ENCODE measurements at regions of chr4 and their contacts with region 1.

Region 1: DNA sequence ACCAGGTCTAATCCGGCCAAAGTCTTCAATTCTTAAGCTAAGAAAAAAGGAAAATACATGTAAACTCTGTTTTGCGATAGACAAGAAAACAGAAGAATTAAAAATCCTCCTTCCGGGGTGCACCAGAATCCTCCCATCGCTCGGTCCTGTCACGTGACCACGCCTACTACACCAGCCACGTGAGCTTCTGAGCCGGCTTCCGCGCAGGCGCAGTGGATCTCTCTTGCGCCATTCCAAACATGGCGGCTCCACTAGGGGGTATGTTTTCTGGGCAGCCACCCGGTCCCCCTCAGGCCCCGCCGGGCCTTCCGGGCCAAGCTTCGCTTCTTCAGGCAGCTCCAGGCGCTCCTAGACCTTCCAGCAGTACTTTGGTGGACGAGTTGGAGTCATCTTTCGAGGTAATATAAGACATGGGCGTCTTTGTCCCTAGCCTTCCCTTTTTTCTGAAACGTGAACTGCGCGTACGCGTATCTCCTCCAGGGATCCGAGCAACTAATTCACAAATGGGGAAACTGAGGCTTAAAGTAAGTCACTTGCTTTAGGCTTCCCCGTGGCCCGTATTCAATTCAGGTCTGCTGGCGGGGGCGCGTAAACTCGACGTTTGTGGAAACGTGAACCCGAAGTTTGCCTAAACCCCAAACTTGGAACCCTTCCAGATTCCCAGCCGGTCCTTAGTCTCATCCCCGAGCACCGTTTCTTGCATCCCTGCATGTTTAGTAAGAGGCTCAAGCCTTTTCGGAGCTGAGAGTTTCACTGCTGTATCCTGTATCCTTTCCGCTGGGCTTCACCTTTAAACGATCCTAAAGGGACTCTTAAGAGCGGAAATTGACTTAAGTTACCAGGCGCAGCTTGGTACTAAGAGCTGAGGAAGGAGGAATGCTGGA is at the start of gene MED28:
- DNase-seq: peak; percentile 86 to 99 (median 96)

Region 2: DNA sequence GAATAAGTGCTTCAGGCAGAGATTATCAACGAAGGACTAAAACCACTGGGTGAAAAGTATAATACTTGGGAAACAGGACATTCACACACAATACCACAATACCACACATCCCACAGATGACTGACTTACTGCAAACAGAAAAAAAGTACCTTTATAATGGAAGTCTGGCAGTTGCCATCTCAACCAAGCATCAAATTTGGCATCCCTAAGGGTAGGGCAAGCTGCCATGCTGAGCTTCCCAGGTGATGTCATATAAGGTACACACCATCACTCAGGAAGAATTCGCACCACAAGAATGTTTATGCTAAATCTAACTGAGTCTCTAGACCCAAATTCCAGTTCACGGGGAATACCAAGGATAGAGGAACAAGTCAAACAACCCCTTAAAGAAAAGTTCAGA is 111.9 kb before region 1 on chr4:
- intact Hi-C with region 1: no loop called
- DNase-seq: no peak

Region 3: DNA sequence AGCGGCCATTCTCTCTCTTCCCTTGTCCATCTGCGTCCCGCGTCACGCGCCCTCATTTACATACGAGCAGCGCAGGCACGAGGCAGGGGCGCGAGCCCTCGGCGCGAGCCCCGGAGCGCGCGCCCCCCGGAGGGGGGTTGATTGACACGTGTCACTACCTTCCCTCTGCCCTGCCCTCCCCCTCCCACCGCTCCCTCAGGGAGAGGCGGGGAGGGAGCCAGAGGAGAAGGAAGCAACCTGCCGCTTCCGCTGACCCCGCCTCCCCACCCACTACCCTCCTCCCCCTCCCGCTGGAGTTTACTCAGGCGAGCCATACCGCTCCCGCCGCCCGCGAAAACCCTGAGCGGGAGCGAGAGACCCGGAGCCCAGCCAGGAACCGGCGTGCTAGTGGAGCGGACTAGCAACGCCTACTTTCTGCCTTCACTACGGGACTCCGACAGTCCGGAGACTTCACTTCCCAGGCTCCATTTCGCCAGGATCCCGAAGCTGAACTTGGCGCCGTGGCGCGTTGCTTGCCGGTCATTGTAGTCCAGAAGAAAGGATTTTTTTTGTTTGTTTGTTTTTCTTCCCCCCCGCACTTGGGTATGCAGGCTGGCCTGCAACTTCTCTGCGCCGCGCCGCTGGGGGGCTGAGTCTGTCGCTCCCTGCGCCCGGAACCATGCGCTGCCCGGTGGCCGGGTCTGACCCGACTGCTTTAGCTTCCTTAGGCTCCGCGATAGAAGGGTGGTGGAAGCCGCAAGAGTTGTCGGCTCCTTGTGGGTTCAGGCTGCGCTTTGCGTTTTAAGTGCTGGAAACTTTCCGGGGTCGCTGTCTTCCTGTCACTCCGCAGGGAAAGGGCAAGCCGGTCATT is 407.3 kb after region 1 on chr4 and contains the start of gene LCORL:
- intact Hi-C with region 1: loop called (anchors 10 kb)
- DNase-seq: peak; percentile 87 to 98 (median 95)

Measured in head of caudate nucleus (tissue), 42 donors.